ENCODE measurements at regions of chr10 and their contacts with region 1.

Region 1: DNA sequence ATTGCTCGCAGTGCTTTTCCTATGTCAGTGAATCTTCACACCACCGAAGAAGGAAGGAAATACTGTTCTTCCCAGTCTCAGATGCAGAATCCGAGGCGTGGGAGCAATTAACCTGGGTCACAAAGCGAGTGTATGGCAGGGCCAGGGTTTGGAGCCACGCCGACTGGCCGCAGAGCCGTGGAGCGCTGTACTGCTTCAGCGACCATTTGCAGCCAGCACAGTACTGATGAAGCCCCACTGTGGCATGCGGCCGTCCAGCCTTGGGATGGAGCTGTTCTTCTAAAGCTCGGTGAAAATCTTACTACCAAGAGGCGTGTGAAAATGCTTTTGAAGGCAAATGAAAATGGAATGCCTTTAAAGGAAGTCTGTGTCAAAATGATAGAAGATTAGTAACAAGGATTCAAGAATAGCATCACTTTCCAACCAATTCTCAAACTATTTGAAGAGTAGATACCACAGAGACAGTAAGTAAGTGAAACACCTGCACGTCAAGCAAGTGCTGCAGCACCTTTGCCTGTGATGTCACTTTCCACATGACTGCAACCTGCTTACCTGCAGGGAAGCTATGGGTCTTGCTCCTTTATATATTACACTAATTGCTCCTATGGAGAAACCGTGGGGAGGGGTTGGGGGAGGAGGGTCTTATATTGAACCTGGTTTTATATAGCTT is 4.9 kb downstream of the PPP2R2D start:
- DNase-seq: peak; percentile 57
- ATAC-seq: peak; percentile 20
- H3K4me3 Mint-ChIP-seq: peak overlapping the region; percentile 36
- H3K27ac Mint-ChIP-seq: peak overlapping the region; percentile 89
- H3K4me1 Mint-ChIP-seq: peaks cover 81% of the 10 kb centered on the region
- H3K27me3 Mint-ChIP-seq: no peaks in the 10 kb centered on the region

Region 2: GRCh38 chr10:131915990-131916766 is 10.4 kb after region 1 on chr10:
- CTCF ChIA-PET with region 1: interaction called, 4 read pairs
- POLR2A ChIA-PET with region 1: no interaction called
- intact Hi-C with region 1: loop called in 1 of 2 experiments (anchors 1 kb)
- DNase-seq: no peak
- ATAC-seq: no peak
- H3K4me3 Mint-ChIP-seq: no peak overlapping the region
- H3K27ac Mint-ChIP-seq: peak overlapping the region; percentile 80
- H3K4me1 Mint-ChIP-seq: peaks cover 73% of the 10 kb centered on the region
- H3K27me3 Mint-ChIP-seq: no peaks in the 10 kb centered on the region

Region 3: GRCh38 chr10:131928248-131929095 is 22.7 kb after region 1 on chr10:
- CTCF ChIA-PET with region 1: interaction called, 5 read pairs
- POLR2A ChIA-PET with region 1: interaction called, 4 read pairs
- intact Hi-C with region 1: loop called in 1 of 2 experiments (anchors 2 kb)
- DNase-seq: peak; percentile 80
- ATAC-seq: peak; percentile 87
- H3K4me3 Mint-ChIP-seq: peak overlapping the region; percentile 29
- H3K27ac Mint-ChIP-seq: peak overlapping the region; percentile 87
- H3K4me1 Mint-ChIP-seq: peaks cover 82% of the 10 kb centered on the region
- H3K27me3 Mint-ChIP-seq: no peaks in the 10 kb centered on the region

Measured in activated CD4-positive, alpha-beta T cell treated with anti-CD3 and anti-CD28 coated beads for 36 hours (primary cell).